B cell (primary cell): ENCODE measurements at regions of chr19 and their contacts with region 1.

Region 1: GRCh38 chr19:36772311-36773222 is at the start of gene ZNF850:
- DNase-seq: peak; percentile 98
- ATAC-seq: peak; percentile 92
- H3K4me3 ChIP-seq: peak within 1 kb of the TSS; percentile 66 to 99 (median 96)
- H3K4me3 Mint-ChIP-seq: peak within 1 kb of the TSS; percentile 98
- H3K27ac ChIP-seq: peak within 1 kb of the TSS; percentile 69 to 81
- H3K27ac Mint-ChIP-seq: peak within 1 kb of the TSS; percentile 94
- H3K4me1 ChIP-seq: peaks cover 15 to 21% of the 10 kb centered on the region in 2 donors
- H3K4me1 Mint-ChIP-seq: peaks cover 25% of the 10 kb centered on the region
- H3K27me3 ChIP-seq: no peaks in the 10 kb centered on the region
- H3K27me3 Mint-ChIP-seq: no peaks in the 10 kb centered on the region
- CTCF ChIP-seq: no peak
- total RNA-seq, gene ZNF850: 6.0 and 6.7 TPM in 2 replicates

Region 2: DNA sequence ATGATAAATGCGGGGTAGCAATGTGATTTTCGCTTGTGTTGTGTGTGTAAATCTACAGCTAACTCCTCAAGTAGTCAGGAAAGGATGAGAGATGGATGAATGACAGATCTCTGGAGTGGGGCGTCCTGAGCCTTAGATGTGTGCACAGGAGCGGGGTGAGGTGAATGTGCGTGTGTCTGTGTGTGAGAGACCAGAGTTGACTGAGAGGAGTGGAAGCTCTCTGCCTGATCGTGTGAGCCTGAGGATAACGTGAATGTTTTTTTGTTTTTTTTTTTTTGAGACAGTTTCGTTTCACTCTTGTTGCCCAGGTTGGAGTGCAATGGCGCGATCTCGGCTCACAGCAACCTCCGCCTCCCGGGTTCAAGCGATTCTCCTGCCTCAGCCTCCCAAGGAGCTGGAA is 106.7 kb before region 1 on chr19:
- CTCF ChIA-PET with region 1: no interaction called
- POLR2A ChIA-PET with region 1: no interaction called
- intact Hi-C with region 1: loop called (anchors 2 kb)
- DNase-seq: peak; percentile 31
- ATAC-seq: no peak
- H3K4me3 ChIP-seq: peak overlapping the region; percentile 63 to 91 (median 80)
- H3K4me3 Mint-ChIP-seq: peak overlapping the region; percentile 98
- H3K27ac ChIP-seq: peak overlapping the region in 1 of 2 donors; percentile 81
- H3K27ac Mint-ChIP-seq: peak overlapping the region; percentile 90
- H3K4me1 ChIP-seq: peaks cover 15 to 19% of the 10 kb centered on the region in 2 donors
- H3K4me1 Mint-ChIP-seq: peaks cover 28% of the 10 kb centered on the region
- H3K27me3 ChIP-seq: no peaks in the 10 kb centered on the region
- H3K27me3 Mint-ChIP-seq: no peaks in the 10 kb centered on the region
- CTCF ChIP-seq: no peak

Region 3: GRCh38 chr19:36707134-36707533 is 65.4 kb before region 1 on chr19:
- CTCF ChIA-PET with region 1: no interaction called
- POLR2A ChIA-PET with region 1: no interaction called
- intact Hi-C with region 1: no loop called
- DNase-seq: no peak
- ATAC-seq: no peak
- H3K4me3 ChIP-seq: no peak overlapping the region
- H3K4me3 Mint-ChIP-seq: no peak overlapping the region
- H3K27ac ChIP-seq: no peak overlapping the region
- H3K27ac Mint-ChIP-seq: no peak overlapping the region
- H3K4me1 ChIP-seq: no peaks in the 10 kb centered on the region
- H3K4me1 Mint-ChIP-seq: no peaks in the 10 kb centered on the region
- H3K27me3 ChIP-seq: no peaks in the 10 kb centered on the region
- H3K27me3 Mint-ChIP-seq: no peaks in the 10 kb centered on the region
- CTCF ChIP-seq: no peak

Region 4: DNA sequence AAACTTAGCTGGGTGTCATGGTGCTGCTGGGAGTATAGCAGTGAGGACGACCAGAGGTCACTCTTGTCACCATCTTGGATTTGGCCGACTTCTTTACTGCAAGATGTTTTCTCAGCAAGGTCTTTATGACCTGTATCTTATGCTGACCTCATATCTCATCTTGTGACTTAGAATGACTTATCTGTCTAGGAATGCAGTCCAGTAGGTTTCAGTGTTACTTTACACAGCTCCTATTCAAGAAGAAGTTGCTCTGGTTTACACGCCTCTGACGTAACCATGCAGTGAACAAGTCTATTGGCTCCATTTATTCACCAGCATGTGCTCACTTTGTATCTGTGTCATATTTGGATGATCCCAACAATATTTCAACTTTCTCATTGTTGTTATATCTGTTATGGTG is 26.7 kb before region 1 on chr19:
- CTCF ChIA-PET with region 1: no interaction called
- POLR2A ChIA-PET with region 1: no interaction called
- intact Hi-C with region 1: no loop called
- DNase-seq: no peak
- ATAC-seq: no peak
- H3K4me3 ChIP-seq: no peak overlapping the region
- H3K4me3 Mint-ChIP-seq: no peak overlapping the region
- H3K27ac ChIP-seq: no peak overlapping the region
- H3K27ac Mint-ChIP-seq: no peak overlapping the region
- H3K4me1 ChIP-seq: no peaks in the 10 kb centered on the region
- H3K4me1 Mint-ChIP-seq: no peaks in the 10 kb centered on the region
- H3K27me3 ChIP-seq: no peaks in the 10 kb centered on the region
- H3K27me3 Mint-ChIP-seq: no peaks in the 10 kb centered on the region
- CTCF ChIP-seq: no peak

Region 5: DNA sequence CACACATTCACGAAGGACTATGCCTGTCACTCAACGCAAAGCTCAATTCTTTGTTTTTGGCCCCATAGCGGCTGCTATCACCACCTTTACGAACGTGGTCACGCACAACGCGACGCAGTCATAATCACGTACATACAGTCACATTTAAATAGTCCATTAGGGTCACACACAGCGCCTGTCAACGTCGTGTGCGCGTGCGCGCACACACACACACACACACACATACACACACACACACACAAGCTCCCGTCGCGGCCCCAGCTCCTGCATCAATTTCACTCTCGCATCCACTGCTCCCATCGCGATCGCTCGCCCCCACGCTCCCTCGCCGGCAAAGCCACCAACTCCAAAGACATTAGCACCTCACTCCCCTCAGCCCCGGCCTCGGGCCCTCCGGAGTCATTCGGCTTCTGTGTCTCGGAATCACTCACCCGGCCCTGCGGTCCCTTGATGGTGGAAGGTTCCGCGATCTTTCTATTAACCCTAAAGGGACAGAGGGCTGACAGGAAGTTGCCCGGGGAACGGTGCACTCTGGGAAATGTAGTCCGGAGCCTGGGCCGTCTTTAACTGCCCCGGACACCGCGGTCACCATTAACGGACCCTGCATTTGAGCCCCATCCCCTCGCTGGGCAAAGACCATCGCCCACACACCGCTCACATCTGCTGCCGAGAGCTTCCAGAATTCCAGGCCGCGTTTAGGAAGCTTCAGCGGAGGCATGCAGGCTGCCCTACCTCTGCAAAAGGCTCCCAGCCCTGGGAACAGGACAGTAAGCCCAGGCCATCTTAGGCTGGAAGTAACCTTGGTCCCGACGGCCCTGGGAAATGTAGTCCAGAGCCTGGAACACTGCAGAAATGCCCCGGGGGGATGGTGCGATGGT is 65.6 kb after region 1 on chr19 and contains the start of gene ZNF790:
- CTCF ChIA-PET with region 1: no interaction called
- POLR2A ChIA-PET with region 1: no interaction called
- intact Hi-C with region 1: loop called (anchors 1 kb)
- DNase-seq: peak; percentile 94
- ATAC-seq: peak; percentile 90
- H3K4me3 ChIP-seq: peak within 1 kb of the TSS; percentile 79 to 90 (median 83)
- H3K4me3 Mint-ChIP-seq: no peak within 1 kb of the TSS
- H3K27ac ChIP-seq: peak within 1 kb of the TSS; percentile 84 to 89
- H3K27ac Mint-ChIP-seq: no peak within 1 kb of the TSS
- H3K4me1 ChIP-seq: peaks cover 10 to 18% of the 10 kb centered on the region in 2 donors
- H3K4me1 Mint-ChIP-seq: no peaks in the 10 kb centered on the region
- H3K27me3 ChIP-seq: no peaks in the 10 kb centered on the region
- H3K27me3 Mint-ChIP-seq: no peaks in the 10 kb centered on the region
- CTCF ChIP-seq: no peak
- total RNA-seq, gene ZNF790: 14.8 and 15.1 TPM in 2 replicates

Region 6: GRCh38 chr19:36939153-36939552 is 166.6 kb after region 1 on chr19:
- CTCF ChIA-PET with region 1: no interaction called
- POLR2A ChIA-PET with region 1: no interaction called
- intact Hi-C with region 1: no loop called
- DNase-seq: no peak
- ATAC-seq: no peak
- H3K4me3 ChIP-seq: no peak overlapping the region
- H3K4me3 Mint-ChIP-seq: no peak overlapping the region
- H3K27ac ChIP-seq: no peak overlapping the region
- H3K27ac Mint-ChIP-seq: no peak overlapping the region
- H3K4me1 ChIP-seq: no peaks in the 10 kb centered on the region
- H3K4me1 Mint-ChIP-seq: no peaks in the 10 kb centered on the region
- H3K27me3 ChIP-seq: no peaks in the 10 kb centered on the region
- H3K27me3 Mint-ChIP-seq: no peaks in the 10 kb centered on the region
- CTCF ChIP-seq: no peak

Region 7: DNA sequence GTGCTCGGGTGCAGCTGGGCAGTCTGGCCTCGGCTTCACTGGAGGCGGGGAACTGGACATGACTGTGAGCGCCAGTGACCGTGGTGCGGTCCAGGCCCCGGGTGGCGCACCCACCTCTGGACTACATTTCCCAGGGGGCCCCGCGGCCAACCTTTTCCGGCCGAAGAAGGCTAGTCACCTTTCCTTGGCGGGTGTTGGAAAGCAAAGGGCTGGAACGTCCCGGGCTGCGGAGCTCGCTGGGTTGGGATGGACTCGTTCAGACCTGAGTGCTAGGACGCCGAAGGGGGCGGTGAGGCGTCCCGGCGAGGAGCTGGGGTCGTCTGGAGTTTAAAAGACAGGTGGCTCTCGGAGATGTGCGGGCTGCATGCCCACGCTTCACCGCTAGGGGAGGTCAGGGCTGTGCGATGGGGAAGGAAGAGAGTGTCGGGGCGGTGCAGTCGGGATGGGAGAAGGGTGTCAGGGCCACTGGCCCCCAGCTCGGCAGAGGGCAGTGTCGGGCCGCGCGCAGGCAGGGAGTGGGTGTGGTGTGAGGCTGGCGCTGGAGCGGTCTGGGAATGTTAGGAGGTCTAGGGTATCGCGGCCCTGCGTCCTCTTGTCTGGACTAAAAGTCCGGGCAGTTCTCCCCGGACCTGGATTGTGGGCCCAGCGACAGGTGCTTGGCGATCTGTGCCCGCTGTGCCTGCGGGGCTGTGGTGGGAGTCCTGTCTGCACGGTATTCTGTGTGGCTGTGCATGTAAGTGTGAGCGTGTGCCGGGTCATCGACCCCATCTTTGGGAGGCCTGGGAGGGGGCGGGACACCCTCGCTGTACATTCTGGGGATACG is 200.7 kb after region 1 on chr19:
- CTCF ChIA-PET with region 1: no interaction called
- POLR2A ChIA-PET with region 1: no interaction called
- intact Hi-C with region 1: loop called (anchors 1 kb)
- DNase-seq: peak; percentile 92
- ATAC-seq: peak; percentile 97
- H3K4me3 ChIP-seq: peak overlapping the region; percentile 52 to 92 (median 79)
- H3K4me3 Mint-ChIP-seq: peak overlapping the region; percentile 97
- H3K27ac ChIP-seq: peak overlapping the region; percentile 49 to 71
- H3K27ac Mint-ChIP-seq: peak overlapping the region; percentile 91
- H3K4me1 ChIP-seq: peaks cover 11 to 16% of the 10 kb centered on the region in 2 donors
- H3K4me1 Mint-ChIP-seq: peaks cover 13% of the 10 kb centered on the region
- H3K27me3 ChIP-seq: no peaks in the 10 kb centered on the region
- H3K27me3 Mint-ChIP-seq: no peaks in the 10 kb centered on the region
- CTCF ChIP-seq: peak; percentile 78

Region 8: GRCh38 chr19:37087110-37087509 is 314.5 kb after region 1 on chr19:
- CTCF ChIA-PET with region 1: no interaction called
- POLR2A ChIA-PET with region 1: no interaction called
- intact Hi-C with region 1: no loop called
- DNase-seq: no peak
- ATAC-seq: no peak
- H3K4me3 ChIP-seq: no peak overlapping the region
- H3K4me3 Mint-ChIP-seq: no peak overlapping the region
- H3K27ac ChIP-seq: no peak overlapping the region
- H3K27ac Mint-ChIP-seq: no peak overlapping the region
- H3K4me1 ChIP-seq: no peaks in the 10 kb centered on the region
- H3K4me1 Mint-ChIP-seq: no peaks in the 10 kb centered on the region
- H3K27me3 ChIP-seq: no peaks in the 10 kb centered on the region
- H3K27me3 Mint-ChIP-seq: no peaks in the 10 kb centered on the region
- CTCF ChIP-seq: no peak

Region 9: DNA sequence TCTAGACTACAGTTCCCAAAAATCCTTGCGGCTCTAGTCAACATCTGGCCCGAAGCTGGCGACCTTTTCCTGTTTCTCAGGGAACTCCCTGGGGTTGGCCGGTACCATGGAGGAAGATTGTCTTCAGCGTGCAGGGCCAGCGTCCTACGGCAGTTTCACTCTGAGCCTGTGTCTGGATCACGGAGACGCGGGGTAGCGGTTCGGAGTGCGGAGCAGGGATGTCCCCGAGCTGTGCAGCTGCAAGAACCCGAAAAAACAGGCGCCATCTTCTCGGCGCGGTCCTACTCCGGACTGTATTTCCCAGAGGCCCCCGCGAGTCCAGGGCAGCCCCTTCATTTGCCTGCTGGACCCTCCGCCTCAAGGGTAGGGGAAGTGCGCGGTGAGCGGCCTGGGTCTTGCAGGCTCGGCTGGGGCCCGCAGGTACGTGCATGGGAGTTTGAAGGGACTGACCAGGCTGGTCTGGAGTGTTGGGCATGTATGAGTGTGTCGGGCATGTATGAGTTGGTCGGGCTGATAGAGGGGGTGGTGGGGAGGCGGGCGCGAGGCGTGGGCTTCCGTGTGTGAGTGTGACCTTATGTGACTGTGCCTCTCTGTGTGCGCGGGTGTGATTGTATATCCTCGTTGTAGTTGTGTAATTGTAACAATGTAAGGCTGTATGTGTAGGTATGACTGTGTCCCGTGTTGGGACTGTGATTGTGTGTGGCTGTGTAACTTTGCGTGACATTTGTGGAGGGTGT is 445.5 kb after region 1 on chr19 and contains the start of gene ZNF383:
- CTCF ChIA-PET with region 1: no interaction called
- POLR2A ChIA-PET with region 1: no interaction called
- intact Hi-C with region 1: loop called (anchors 1 kb)
- DNase-seq: peak; percentile 92
- ATAC-seq: peak; percentile 90
- H3K4me3 ChIP-seq: peak within 1 kb of the TSS; percentile 78 to 96 (median 88)
- H3K4me3 Mint-ChIP-seq: peak within 1 kb of the TSS; percentile 97
- H3K27ac ChIP-seq: peak within 1 kb of the TSS; percentile 77 to 86
- H3K27ac Mint-ChIP-seq: peak within 1 kb of the TSS; percentile 100
- H3K4me1 ChIP-seq: peaks cover 10 to 12% of the 10 kb centered on the region in 2 donors
- H3K4me1 Mint-ChIP-seq: peaks cover 24% of the 10 kb centered on the region
- H3K27me3 ChIP-seq: no peaks in the 10 kb centered on the region
- H3K27me3 Mint-ChIP-seq: no peaks in the 10 kb centered on the region
- CTCF ChIP-seq: no peak
- total RNA-seq, gene ZNF383: 37.2 and 42.2 TPM in 2 replicates